Colonic mucosa (tissue), 4 donors: ENCODE measurements at regions of chr18 and their contacts with region 1.

Region 1: GRCh38 chr18:47204908-47205522 is 28.9 kb upstream of the IER3IP1 start:
- DNase-seq: peak; percentile 34
- H3K4me3 ChIP-seq: no peak overlapping the region
- H3K27ac ChIP-seq: no peak overlapping the region
- H3K4me1 ChIP-seq: no peaks in the 10 kb centered on the region
- H3K27me3 ChIP-seq: no peaks in the 10 kb centered on the region
- CTCF ChIP-seq: peak; percentile 69

Region 2: DNA sequence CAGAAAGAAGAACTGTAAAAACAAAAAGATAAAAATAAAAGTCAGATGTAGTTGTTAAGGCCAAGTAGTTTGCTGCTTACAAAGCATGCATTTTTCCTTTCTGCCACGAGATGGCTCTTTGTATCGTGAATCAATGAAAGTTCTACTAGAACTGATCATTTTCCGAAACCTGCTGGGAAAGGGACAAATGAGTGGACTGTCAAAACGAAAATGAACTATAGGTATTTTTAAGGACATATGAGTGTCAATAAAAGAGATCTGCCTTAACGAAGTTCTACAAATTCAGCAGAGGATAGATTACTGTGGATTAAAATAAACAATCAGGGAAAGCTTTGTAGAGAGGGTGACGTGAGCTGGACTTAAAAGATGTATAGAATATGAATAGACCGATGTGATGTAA is 154.5 kb before region 1 on chr18:
- intact Hi-C with region 1: loop called (anchors 2 kb)
- DNase-seq: peak; percentile 21
- H3K4me3 ChIP-seq: no peak overlapping the region
- H3K27ac ChIP-seq: no peak overlapping the region
- H3K4me1 ChIP-seq: no peaks in the 10 kb centered on the region
- H3K27me3 ChIP-seq: no peaks in the 10 kb centered on the region
- CTCF ChIP-seq: peak; percentile 55

Region 3: DNA sequence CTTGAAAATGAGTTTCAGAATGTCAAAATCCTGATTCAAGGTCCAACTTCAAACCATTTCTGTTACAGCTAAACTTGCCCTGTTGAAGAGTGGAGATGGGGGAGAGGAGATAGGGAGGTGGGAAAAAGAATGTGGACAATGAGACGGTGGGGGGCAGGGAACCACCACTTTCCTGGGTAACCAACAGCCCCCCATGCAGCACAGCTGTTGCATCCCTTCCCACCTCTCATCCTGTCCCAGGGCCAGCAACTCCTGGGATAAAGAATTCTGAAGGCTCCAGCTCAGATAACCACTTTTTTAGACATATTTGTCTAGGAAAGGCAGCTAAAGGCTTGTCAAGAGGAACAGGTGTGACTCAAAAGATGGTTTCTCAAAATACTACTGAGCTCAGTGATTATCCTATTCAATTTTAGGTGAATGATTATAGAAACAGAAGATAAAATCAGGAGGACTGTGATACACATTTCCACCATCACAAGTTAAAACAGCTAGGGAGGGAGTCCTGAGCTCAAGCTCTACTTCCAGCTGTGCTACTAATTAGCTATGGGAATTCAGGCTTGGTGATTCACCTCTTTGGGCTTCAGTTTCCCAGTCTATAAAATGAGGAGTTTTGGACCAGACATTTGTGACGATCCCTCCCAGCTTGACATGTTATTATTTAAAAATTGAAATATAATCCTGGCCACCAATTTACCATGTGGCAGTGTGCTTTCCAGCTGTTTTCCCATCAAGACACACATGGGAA is 91.0 kb before region 1 on chr18:
- intact Hi-C with region 1: no loop called
- DNase-seq: no peak
- H3K4me3 ChIP-seq: no peak overlapping the region
- H3K27ac ChIP-seq: no peak overlapping the region
- H3K4me1 ChIP-seq: no peaks in the 10 kb centered on the region
- H3K27me3 ChIP-seq: no peaks in the 10 kb centered on the region
- CTCF ChIP-seq: no peak

Region 4: GRCh38 chr18:47254341-47254939 is 49.4 kb after region 1 on chr18:
- intact Hi-C with region 1: loop called (anchors 10 kb)
- DNase-seq: peak; percentile 45
- H3K4me3 ChIP-seq: no peak overlapping the region
- H3K27ac ChIP-seq: no peak overlapping the region
- H3K4me1 ChIP-seq: no peaks in the 10 kb centered on the region
- H3K27me3 ChIP-seq: peaks cover 59% of the 10 kb centered on the region
- CTCF ChIP-seq: no peak